ENCODE measurements at regions of chr3 and their contacts with region 1.

Region 1: GRCh38 chr3:38136777-38137614 is at the start of gene ACAA1:
- DNase-seq: peak; percentile 99
- H3K4me3 Mint-ChIP-seq: peak within 1 kb of the TSS; percentile 90
- H3K27ac Mint-ChIP-seq: peak within 1 kb of the TSS; percentile 99
- H3K4me1 Mint-ChIP-seq: peaks cover 64% of the 10 kb centered on the region
- H3K27me3 Mint-ChIP-seq: no peaks in the 10 kb centered on the region
- total RNA-seq, gene ACAA1: 68.7 and 71.6 TPM in 2 replicates

Region 2: GRCh38 chr3:36993326-36994283 is 1143.4 kb before region 1 on chr3 and contains the start of gene MLH1:
- intact Hi-C with region 1: loop called (anchors 2 kb)
- DNase-seq: peak; percentile 100
- H3K4me3 Mint-ChIP-seq: no peak within 1 kb of the TSS
- H3K27ac Mint-ChIP-seq: no peak within 1 kb of the TSS
- H3K4me1 Mint-ChIP-seq: peaks cover 38% of the 10 kb centered on the region
- H3K27me3 Mint-ChIP-seq: no peaks in the 10 kb centered on the region
- total RNA-seq, gene MLH1: 69.5 and 71.0 TPM in 2 replicates

Region 3: DNA sequence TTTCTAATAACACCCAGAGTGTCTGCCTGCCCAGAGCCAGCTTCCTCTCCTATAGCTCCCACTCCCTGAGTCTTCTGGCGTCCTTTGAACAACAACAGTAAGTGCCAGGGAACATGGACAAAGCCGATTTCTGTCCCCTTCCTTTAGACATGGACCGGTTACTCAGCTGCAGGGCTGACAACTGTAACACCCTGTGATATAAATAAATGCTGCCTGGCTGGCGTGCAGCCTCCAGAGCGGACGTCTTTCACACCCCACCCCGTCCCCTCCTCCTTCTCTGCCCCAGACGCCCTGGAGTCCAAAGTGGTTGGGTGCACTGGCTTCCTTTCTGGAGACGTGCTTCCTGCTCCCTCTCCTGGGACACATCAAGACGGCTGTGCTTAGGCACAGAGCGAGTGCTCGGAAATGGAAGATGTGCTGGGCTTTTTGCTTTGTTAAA is 680.7 kb before region 1 on chr3:
- intact Hi-C with region 1: no loop called
- DNase-seq: no peak
- H3K4me3 Mint-ChIP-seq: no peak overlapping the region
- H3K27ac Mint-ChIP-seq: no peak overlapping the region
- H3K4me1 Mint-ChIP-seq: peaks cover 7% of the 10 kb centered on the region
- H3K27me3 Mint-ChIP-seq: peaks cover 49% of the 10 kb centered on the region

Region 4: GRCh38 chr3:38205472-38205805 is 68.4 kb after region 1 on chr3:
- intact Hi-C with region 1: loop called (anchors 1 kb)
- DNase-seq: peak; percentile 62
- H3K4me3 Mint-ChIP-seq: peak overlapping the region; percentile 2
- H3K27ac Mint-ChIP-seq: peak overlapping the region; percentile 85
- H3K4me1 Mint-ChIP-seq: peaks cover 51% of the 10 kb centered on the region
- H3K27me3 Mint-ChIP-seq: no peaks in the 10 kb centered on the region

Region 5: GRCh38 chr3:38221005-38221404 is 84.0 kb after region 1 on chr3:
- intact Hi-C with region 1: no loop called
- DNase-seq: no peak
- H3K4me3 Mint-ChIP-seq: no peak overlapping the region
- H3K27ac Mint-ChIP-seq: peak overlapping the region; percentile 1
- H3K4me1 Mint-ChIP-seq: peaks cover 14% of the 10 kb centered on the region
- H3K27me3 Mint-ChIP-seq: no peaks in the 10 kb centered on the region

Region 6: GRCh38 chr3:38346587-38347410 is 209.8 kb after region 1 on chr3 and contains the start of gene XYLB:
- intact Hi-C with region 1: loop called (anchors 1 kb)
- DNase-seq: peak; percentile 96
- H3K4me3 Mint-ChIP-seq: peak within 1 kb of the TSS; percentile 80
- H3K27ac Mint-ChIP-seq: no peak within 1 kb of the TSS
- H3K4me1 Mint-ChIP-seq: peaks cover 7% of the 10 kb centered on the region
- H3K27me3 Mint-ChIP-seq: peaks cover 8% of the 10 kb centered on the region
- total RNA-seq, gene XYLB: 11.1 and 11.6 TPM in 2 replicates

Region 7: GRCh38 chr3:38496131-38496910 is 359.3 kb after region 1 on chr3 and contains the start of gene EXOG:
- intact Hi-C with region 1: loop called (anchors 5 kb)
- DNase-seq: peak; percentile 97
- H3K4me3 Mint-ChIP-seq: peak within 1 kb of the TSS; percentile 99
- H3K27ac Mint-ChIP-seq: peak within 1 kb of the TSS; percentile 86
- H3K4me1 Mint-ChIP-seq: peaks cover 23% of the 10 kb centered on the region
- H3K27me3 Mint-ChIP-seq: no peaks in the 10 kb centered on the region
- total RNA-seq, gene EXOG: 18.0 and 20.8 TPM in 2 replicates

Measured in activated CD4-positive, alpha-beta T cell treated with anti-CD3 and anti-CD28 coated beads, Interleukin-2, amount 10 ng/mL, durations not matched to agents 24 days and 14 days (primary cell).